ENCODE measurements at regions of chr3 and their contacts with region 1.

Region 1: DNA sequence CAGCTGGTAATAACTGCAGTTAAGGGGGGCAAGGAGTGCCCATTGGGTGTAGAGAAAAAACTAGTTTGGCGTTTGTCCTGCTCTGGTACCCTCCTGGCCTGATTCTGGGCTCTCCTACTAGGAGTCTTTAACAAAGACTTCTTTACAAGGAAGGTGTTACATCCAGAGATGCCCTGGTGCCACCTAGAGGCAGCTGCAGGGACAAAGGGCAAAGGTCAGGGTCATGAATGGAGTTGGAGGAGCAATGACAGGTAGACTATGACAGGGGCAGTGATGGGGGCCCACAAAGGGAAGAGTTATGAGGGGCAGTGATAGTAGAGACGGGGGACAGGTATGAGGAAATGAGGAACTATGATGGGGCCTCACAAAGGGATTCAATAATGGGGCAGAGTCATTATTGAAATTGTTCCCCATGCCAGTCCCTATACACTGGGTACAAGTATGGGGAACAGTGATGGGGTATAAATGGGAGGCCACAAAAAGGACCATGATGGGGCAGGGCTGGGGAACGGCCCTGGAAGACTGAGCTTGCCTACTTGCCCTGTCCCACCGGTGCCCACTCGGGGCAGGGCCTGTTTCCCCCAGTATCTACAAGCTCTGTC is 7.9 kb downstream of the CCDC71 start:
- DNase-seq: no peak
- ATAC-seq: peak; percentile 79
- H3K4me3 ChIP-seq: no peak overlapping the region
- H3K27ac ChIP-seq: no peak overlapping the region
- H3K4me1 ChIP-seq: no peaks in the 10 kb centered on the region
- H3K27me3 ChIP-seq: no peaks in the 10 kb centered on the region
- CTCF ChIP-seq: peak; percentile 80

Region 2: GRCh38 chr3:49076646-49077045 is 81.6 kb before region 1 on chr3:
- CTCF ChIA-PET with region 1: no interaction called
- POLR2A ChIA-PET with region 1: no interaction called
- in situ Hi-C with region 1: no loop called
- intact Hi-C with region 1: no loop called
- DNase-seq: no peak
- ATAC-seq: peak; percentile 48; the same call in 1 of the 2 replicates
- H3K4me3 ChIP-seq: no peak overlapping the region
- H3K27ac ChIP-seq: no peak overlapping the region
- H3K4me1 ChIP-seq: no peaks in the 10 kb centered on the region
- H3K27me3 ChIP-seq: no peaks in the 10 kb centered on the region
- CTCF ChIP-seq: no peak

Region 3: DNA sequence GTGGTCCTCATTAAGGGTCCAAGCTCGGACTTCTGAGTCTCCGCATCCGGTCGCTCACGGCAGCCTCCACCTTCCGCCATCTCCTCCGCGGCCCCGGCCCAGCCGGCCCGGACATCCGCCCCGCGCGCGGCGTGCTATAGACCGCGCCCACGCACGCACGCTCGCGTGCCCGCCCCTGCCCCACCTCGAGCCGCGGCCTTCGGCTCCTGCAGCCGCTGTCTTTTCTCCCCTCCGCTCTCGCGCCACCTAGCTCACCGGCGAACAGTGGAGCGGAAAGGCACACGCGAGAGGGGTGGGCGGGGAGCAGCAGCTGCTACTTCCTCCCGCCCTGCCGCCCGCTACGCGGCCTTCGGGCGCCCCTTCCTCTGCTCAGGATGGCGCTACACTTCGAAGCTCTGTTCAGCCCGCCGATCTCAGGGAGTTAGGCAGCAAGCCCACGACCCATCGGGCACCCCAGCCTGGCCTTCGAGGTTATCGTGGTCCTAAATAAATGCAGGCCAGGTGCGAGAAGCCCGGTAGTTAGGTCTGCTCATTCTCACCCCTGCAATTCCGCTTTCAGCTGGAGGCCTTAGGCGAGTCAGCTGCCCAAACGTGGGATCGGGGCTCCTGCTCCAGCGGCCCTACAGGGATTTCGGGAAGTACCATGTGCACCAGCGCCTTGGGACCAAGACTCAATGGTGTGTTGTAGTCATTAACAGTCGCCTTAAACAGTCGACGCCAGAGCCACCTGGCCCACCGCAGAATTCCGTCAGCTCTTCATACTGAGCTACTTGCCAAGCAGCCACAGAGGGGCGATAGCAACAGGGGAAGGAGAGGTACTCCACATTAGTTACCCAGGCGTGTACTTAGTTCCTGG is 182.0 kb after region 1 on chr3 and contains the start of gene USP4:
- CTCF ChIA-PET with region 1: no interaction called
- POLR2A ChIA-PET with region 1: interaction called, 16 read pairs
- in situ Hi-C with region 1: no loop called
- intact Hi-C with region 1: no loop called
- DNase-seq: peak; percentile 47
- ATAC-seq: peak; percentile 97
- H3K4me3 ChIP-seq: peak within 1 kb of the TSS; percentile 72 to 83
- H3K27ac ChIP-seq: peak within 1 kb of the TSS; percentile 91
- H3K4me1 ChIP-seq: peaks cover 3% of the 10 kb centered on the region; the same call in 1 of the 2 replicates
- H3K27me3 ChIP-seq: no peaks in the 10 kb centered on the region
- CTCF ChIP-seq: peak; percentile 49; the same call in 1 of the 2 replicates
- total RNA-seq, gene USP4: 39.9 TPM

Measured in Panc1 (cell line).